ENCODE measurements at regions of chr4 and their contacts with region 1.

Region 1: GRCh38 chr4:152500800-152501434 is 35.0 kb downstream of the FBXW7 start:
- DNase-seq: no peak
- H3K4me3 ChIP-seq: no peak overlapping the region
- H3K27ac ChIP-seq: no peak overlapping the region
- H3K4me1 ChIP-seq: no peaks in the 10 kb centered on the region
- H3K27me3 ChIP-seq: no peaks in the 10 kb centered on the region
- CTCF ChIP-seq: peak; percentile 45 to 78 (median 56)
- EP300 ChIP-seq: no peak
- POLR2A ChIP-seq: no peak

Region 2: DNA sequence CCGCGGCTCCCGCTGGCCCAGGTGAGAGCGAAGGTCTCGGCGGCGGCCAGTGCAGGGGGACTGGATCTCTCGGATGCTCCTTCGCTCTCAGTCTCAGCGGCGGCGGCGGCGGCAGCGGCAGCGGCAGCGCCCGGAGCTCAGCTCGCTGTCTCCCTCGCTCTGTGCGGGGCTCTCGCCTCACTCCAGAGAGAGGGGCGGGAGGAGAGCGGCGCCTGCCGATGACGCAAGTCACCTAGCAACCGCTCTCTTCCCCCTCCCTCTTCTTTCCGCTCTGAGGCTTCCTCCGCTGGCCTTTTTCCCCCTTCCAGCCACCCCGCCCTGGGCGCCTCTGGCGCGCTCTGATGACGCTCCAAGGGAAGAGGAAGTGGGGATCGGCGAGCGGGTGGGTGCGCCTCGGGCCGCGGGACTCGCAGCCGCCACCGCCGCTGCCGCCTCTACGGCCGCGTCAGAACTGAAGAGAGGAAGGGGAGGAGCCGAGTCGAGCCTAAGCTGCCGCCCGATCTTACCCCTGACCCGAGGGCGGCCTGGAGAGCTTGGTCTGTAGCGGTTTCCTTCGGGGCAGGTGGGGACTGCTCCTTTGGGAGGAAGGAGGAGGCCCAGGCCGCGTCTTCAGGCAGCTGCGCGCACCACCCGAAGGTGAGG is 35.1 kb after region 1 on chr4 and contains the start of gene FBXW7:
- intact Hi-C with region 1: loop called (anchors 5 kb)
- DNase-seq: peak; percentile 99
- H3K4me3 ChIP-seq: peak within 1 kb of the TSS; percentile 93 to 98 (median 96)
- H3K27ac ChIP-seq: peak within 1 kb of the TSS; percentile 93 to 97 (median 96)
- H3K4me1 ChIP-seq: peaks cover 0 to 45% (median 30%) of the 10 kb centered on the region in 4 donors
- H3K27me3 ChIP-seq: no peaks in the 10 kb centered on the region
- CTCF ChIP-seq: no peak
- EP300 ChIP-seq: peak in 2 of 4 donors; percentile 49 to 80
- POLR2A ChIP-seq: peak; percentile 71 to 84
- total RNA-seq, gene FBXW7: 74.9 to 122 (median 81.4) TPM

Region 3: GRCh38 chr4:152640058-152640833 is 139.3 kb after region 1 on chr4:
- intact Hi-C with region 1: loop called (anchors 1 kb)
- DNase-seq: no peak
- H3K4me3 ChIP-seq: no peak overlapping the region
- H3K27ac ChIP-seq: no peak overlapping the region
- H3K4me1 ChIP-seq: peaks cover 0 to 14% (median 8%) of the 10 kb centered on the region in 4 donors
- H3K27me3 ChIP-seq: no peaks in the 10 kb centered on the region
- CTCF ChIP-seq: peak in 3 of 4 experiments; percentile 16 to 57 (median 40)
- EP300 ChIP-seq: no peak
- POLR2A ChIP-seq: no peak

Region 4: GRCh38 chr4:152735396-152735859 is 234.5 kb after region 1 on chr4:
- intact Hi-C with region 1: loop called (anchors 2 kb)
- DNase-seq: no peak
- H3K4me3 ChIP-seq: no peak overlapping the region
- H3K27ac ChIP-seq: no peak overlapping the region
- H3K4me1 ChIP-seq: no peaks in the 10 kb centered on the region
- H3K27me3 ChIP-seq: no peaks in the 10 kb centered on the region
- CTCF ChIP-seq: peak in 3 of 4 experiments; percentile 28 to 47 (median 44)
- EP300 ChIP-seq: no peak
- POLR2A ChIP-seq: no peak

Measured in sigmoid colon (tissue), 7 donors.